ENCODE measurements at regions of chr11 and their contacts with region 1.

Region 1: GRCh38 chr11:13114566-13115379 is 105.7 kb downstream of the RASSF10 start:
- DNase-seq: peak; percentile 81 to 82
- H3K4me3 ChIP-seq: no peak overlapping the region
- H3K4me3 Mint-ChIP-seq: no peak overlapping the region
- H3K27ac Mint-ChIP-seq: peak overlapping the region; percentile 11
- H3K4me1 ChIP-seq: peaks cover 5% of the 10 kb centered on the region; the same call in 1 of the 2 replicates
- H3K4me1 Mint-ChIP-seq: peaks cover 10% of the 10 kb centered on the region
- H3K27me3 ChIP-seq: no peaks in the 10 kb centered on the region; the same call in 1 of the 2 replicates
- H3K27me3 Mint-ChIP-seq: no peaks in the 10 kb centered on the region
- CTCF ChIP-seq: peak in 1 of 2 experiments; percentile 66

Region 2: GRCh38 chr11:12704049-12704448 is 410.7 kb before region 1 on chr11:
- CTCF ChIA-PET with region 1: no interaction called
- POLR2A ChIA-PET with region 1: no interaction called
- intact Hi-C with region 1: no loop called
- DNase-seq: no peak
- H3K4me3 ChIP-seq: no peak overlapping the region
- H3K4me3 Mint-ChIP-seq: no peak overlapping the region
- H3K27ac Mint-ChIP-seq: no peak overlapping the region
- H3K4me1 ChIP-seq: no peaks in the 10 kb centered on the region
- H3K4me1 Mint-ChIP-seq: peaks cover 31% of the 10 kb centered on the region
- H3K27me3 ChIP-seq: no peaks in the 10 kb centered on the region
- H3K27me3 Mint-ChIP-seq: no peaks in the 10 kb centered on the region
- CTCF ChIP-seq: no peak

Region 3: DNA sequence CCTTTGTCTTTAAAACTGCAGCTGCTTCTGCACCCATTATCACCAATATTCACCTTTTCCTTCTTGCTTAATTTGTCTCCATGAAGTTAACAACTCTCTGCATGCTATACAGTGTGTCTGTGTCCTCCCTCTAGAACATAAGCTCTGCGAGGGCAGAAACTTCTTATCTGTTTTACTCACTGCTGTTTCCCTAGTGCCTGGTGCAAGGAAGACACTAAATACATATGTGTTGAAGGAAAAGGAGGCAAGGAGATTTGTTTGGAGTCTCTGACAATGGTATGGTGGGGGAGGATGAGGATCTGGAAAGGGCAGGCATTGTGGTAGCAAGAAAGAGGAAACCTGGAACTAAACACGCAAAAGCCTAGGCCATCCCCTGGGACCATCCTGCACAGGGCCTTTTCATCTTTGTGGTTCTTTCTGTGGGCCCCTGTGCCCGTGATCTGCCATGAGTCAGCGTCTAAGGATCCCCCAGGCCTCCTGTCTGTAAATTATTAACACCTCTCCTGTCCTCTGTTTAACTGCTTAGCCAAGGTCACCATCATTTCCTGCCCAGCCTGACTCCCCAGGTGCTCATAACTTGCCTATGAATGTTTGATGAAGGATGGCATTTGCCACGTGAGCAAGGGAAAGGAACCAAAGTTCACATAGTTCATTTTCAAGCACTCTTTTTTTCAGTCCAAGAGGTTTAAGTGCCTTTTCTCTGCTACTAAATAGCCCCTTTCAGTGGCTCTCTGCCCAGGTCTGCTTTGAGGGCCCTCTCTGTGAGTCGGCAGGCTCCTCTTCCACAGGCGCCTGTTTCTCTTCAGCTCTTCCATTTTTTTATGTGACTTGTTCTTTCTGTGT is 25.5 kb after region 1 on chr11:
- CTCF ChIA-PET with region 1: interaction called, 3 read pairs
- POLR2A ChIA-PET with region 1: no interaction called
- intact Hi-C with region 1: loop called (anchors 2 kb)
- DNase-seq: peak; percentile 89 to 95
- H3K4me3 ChIP-seq: no peak overlapping the region
- H3K4me3 Mint-ChIP-seq: peak overlapping the region; percentile 23
- H3K27ac Mint-ChIP-seq: peak overlapping the region; percentile 72
- H3K4me1 ChIP-seq: peaks cover 78% of the 10 kb centered on the region
- H3K4me1 Mint-ChIP-seq: peaks cover 54% of the 10 kb centered on the region
- H3K27me3 ChIP-seq: no peaks in the 10 kb centered on the region
- H3K27me3 Mint-ChIP-seq: no peaks in the 10 kb centered on the region
- CTCF ChIP-seq: no peak

Region 4: DNA sequence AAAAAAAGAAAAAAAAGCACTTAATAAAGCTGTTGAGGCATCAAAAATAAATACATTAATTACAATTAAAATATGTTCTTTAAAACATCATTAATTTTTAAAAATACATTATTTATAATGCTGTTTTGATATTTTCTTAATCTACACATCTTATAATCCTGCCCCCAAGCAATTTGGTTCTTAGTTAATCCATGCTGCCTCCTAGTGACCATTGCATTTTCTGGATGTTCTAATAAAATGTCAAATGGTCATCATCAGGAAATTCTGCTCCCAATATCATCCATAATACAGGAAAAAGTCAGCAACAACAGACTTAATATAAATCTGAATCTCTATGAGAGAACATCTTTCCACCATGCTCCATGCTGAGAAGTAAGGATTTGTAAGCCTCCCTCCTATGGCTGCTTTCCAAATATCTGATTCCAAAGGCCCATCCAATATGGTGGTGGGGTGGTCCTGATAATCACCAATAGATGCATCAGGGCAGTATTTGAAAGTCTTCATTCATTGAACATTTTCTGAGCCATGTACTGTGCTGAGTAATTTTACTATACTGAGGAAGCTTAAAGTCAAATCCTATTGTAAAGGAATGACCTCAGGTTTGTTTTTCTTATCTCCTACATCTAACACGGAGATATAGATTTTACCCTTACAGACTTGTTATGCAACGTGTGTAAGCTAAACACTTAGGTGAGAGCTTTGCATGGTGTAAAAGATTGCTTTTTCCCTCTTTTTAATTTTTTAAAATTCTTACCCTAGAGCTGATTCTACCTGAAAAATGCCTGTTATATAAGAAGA is 38.2 kb after region 1 on chr11:
- CTCF ChIA-PET with region 1: interaction called, 4 read pairs
- POLR2A ChIA-PET with region 1: no interaction called
- intact Hi-C with region 1: loop called (anchors 2 kb)
- DNase-seq: peak in 1 of 2 experiments; percentile 39
- H3K4me3 ChIP-seq: no peak overlapping the region
- H3K4me3 Mint-ChIP-seq: no peak overlapping the region
- H3K27ac Mint-ChIP-seq: no peak overlapping the region
- H3K4me1 ChIP-seq: peaks cover 9% of the 10 kb centered on the region; the same call in 1 of the 2 replicates
- H3K4me1 Mint-ChIP-seq: peaks cover 17% of the 10 kb centered on the region
- H3K27me3 ChIP-seq: no peaks in the 10 kb centered on the region
- H3K27me3 Mint-ChIP-seq: no peaks in the 10 kb centered on the region
- CTCF ChIP-seq: peak; percentile 26 to 38